ENCODE measurements at regions of chr7 and their contacts with region 1.

Region 1: DNA sequence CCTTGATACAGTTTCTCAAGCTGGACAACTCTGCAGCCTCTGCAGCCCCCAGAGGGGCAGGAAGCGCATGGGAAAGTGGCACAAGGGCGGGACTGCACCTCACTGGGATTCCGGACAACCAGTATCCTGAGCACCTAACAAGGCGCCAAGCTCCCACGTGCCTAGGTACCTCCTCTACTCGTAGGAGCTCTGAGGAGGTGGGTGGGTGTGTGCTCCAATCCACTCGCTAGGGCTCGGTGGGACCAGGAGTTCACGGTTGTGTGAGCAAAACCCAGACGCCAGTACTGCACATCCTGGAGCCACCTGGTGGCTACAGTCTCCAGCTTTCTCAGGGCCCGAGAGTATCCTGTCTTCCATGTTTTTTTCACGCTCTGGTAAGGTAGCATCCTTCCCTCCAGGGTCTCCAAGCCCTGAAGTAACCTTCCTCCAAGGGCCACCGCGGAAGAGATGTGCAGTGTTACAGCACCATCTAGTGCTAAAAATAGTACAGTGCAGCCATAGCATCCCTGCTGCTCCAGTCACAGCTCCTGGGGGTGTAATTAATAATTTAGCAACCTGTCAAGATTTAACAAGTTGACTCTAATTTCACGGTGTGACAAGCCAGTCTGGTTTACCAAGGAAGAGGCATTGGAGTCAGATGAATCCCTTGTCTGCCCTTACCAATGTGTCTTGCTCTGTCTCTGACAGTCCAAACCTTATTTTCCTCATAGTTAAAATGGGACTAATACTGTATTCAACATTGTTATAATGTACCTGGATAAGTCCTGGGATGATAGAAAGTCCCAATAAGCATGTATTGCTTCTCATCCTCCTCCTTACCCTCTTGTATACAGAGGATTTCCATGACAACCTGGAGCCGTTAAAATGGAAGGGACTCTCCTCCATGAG is 70.4 kb downstream of the HERPUD2 start:
- DNase-seq: peak in 1 of 2 experiments; percentile 32
- H3K4me3 ChIP-seq: no peak overlapping the region
- H3K27ac ChIP-seq: no peak overlapping the region
- H3K4me1 ChIP-seq: no peaks in the 10 kb centered on the region
- H3K27me3 ChIP-seq: no peaks in the 10 kb centered on the region
- CTCF ChIP-seq: peak; percentile 93

Region 2: DNA sequence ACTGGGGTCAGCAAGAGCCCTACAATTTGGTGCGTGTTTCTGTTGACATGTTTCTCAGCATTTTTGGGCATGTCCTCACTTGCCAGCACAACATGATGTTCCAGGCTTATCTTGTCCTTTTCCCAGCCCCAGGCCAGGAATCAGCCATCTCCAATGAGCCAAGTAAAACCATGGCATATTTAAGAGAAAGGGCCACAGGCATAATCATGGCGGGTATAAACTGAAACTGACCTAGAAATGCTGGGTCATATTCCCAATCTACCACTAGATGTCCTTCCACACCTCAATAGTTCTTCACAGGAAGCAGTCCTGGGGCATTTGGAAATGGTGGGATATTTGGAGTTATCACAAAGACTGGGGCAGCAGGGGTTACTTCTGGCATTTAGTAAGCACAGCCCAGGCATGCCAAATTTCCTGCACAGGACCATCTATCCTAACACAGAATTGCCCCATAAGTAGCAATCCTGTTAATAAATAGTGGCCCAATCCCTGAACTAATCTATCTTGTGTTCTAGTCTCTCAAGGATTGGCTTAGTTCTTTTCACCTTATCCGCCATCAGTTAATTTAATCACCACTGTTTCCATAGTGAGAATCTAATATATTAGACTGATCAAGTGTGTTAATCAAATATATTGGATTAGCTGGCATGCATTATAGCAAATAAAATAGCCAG is 865.0 kb before region 1 on chr7:
- CTCF ChIA-PET with region 1: no interaction called
- POLR2A ChIA-PET with region 1: no interaction called
- intact Hi-C with region 1: loop called (anchors 10 kb)
- DNase-seq: no peak
- H3K4me3 ChIP-seq: no peak overlapping the region
- H3K27ac ChIP-seq: no peak overlapping the region
- H3K4me1 ChIP-seq: peaks cover 51% of the 10 kb centered on the region
- H3K27me3 ChIP-seq: no peaks in the 10 kb centered on the region
- CTCF ChIP-seq: peak; percentile 79

Measured in PC-9 (cell line).